ENCODE measurements at regions of chr1 and their contacts with region 1.

Region 1: DNA sequence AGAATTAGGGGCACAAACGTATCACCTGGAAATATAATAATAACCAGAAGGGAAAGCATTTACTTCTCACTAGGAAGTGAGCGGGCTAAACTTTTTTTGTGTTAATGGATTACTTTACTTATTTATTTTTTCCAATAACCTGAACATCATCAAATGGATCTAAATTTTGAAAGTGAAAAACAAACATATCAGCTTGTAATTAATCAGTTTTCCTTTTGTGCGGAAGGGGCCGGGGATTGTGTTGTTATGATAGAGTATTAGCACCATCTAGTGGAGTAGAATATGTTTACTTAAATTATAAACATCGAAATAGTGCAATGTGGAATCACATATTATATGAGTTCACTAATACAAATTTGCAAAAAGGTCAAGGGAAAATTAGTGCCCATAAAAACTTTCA is 9.0 kb downstream of the CFH start:
- DNase-seq: peak in 1 of 2 donors; percentile 51
- H3K4me3 ChIP-seq: peak overlapping the region in 2 of 4 donors; percentile 6 to 19
- H3K27ac ChIP-seq: peak overlapping the region in 1 of 5 donors; percentile 8
- H3K4me1 ChIP-seq: no peaks in the 10 kb centered on the region
- H3K27me3 ChIP-seq: no peaks in the 10 kb centered on the region
- CTCF ChIP-seq: peak in 4 of 7 experiments; percentile 20 to 52 (median 37)
- EP300 ChIP-seq: no peak
- POLR2A ChIP-seq: no peak

Region 2: DNA sequence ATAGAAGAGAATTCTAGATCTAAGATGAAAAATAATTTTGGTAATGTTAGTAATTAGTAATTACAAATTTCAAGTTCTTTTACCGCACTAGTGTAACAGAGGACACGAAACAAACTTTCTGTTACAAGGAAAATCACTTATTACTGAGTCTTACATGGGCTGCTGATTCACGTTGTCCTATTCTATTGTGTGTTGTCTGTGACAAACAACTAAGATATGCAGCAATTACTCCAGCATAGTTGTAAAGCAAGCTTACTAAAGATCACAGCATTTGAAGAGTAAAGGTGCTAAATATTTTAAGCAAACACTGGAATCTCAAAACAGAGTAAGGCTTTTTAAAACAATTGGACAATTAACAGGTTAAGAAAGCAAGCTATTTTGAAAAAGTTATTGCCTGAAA is 555.0 kb before region 1 on chr1:
- intact Hi-C with region 1: no loop called
- DNase-seq: no peak
- H3K4me3 ChIP-seq: no peak overlapping the region
- H3K27ac ChIP-seq: no peak overlapping the region
- H3K4me1 ChIP-seq: no peaks in the 10 kb centered on the region
- H3K27me3 ChIP-seq: no peaks in the 10 kb centered on the region
- CTCF ChIP-seq: no peak
- EP300 ChIP-seq: no peak
- POLR2A ChIP-seq: no peak

Region 3: GRCh38 chr1:196148367-196148970 is 512.4 kb before region 1 on chr1:
- intact Hi-C with region 1: loop called (anchors 5 kb)
- DNase-seq: peak in 1 of 2 donors; percentile 59
- H3K4me3 ChIP-seq: no peak overlapping the region
- H3K27ac ChIP-seq: no peak overlapping the region
- H3K4me1 ChIP-seq: peaks cover 0 to 7% (median 0%) of the 10 kb centered on the region in 4 donors
- H3K27me3 ChIP-seq: no peaks in the 10 kb centered on the region
- CTCF ChIP-seq: peak in 4 of 7 experiments; percentile 11 to 59 (median 45)
- EP300 ChIP-seq: no peak
- POLR2A ChIP-seq: no peak

Region 4: DNA sequence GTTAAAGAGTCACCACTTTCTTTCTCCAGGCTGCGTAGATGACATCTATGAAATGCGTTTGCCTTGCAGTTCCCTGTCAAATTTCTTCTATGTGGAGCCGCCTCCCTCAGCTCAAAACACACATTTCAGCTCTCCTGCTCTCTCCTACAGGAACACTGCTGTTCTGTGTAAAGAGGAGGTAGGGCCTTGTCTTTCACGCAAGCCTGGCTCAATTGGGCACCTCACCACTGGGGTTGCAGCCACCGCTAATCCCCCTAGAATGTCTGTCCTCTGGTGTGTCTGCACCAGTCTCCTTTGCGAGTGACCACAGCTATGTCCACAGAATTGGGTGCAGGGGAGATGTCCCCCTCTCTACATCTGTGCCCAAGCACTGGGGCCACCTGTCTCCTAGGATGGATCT is 195.2 kb after region 1 on chr1:
- intact Hi-C with region 1: no loop called
- DNase-seq: no peak
- H3K4me3 ChIP-seq: no peak overlapping the region
- H3K27ac ChIP-seq: no peak overlapping the region
- H3K4me1 ChIP-seq: no peaks in the 10 kb centered on the region
- H3K27me3 ChIP-seq: no peaks in the 10 kb centered on the region
- CTCF ChIP-seq: no peak
- EP300 ChIP-seq: no peak
- POLR2A ChIP-seq: no peak

Measured in stomach (tissue), 19 donors.